Activated B cell treated with CpG ODN at 0.5 μM for 24 hours (primary cell): ENCODE measurements at regions of chr7 and their contacts with region 1.

Region 1: DNA sequence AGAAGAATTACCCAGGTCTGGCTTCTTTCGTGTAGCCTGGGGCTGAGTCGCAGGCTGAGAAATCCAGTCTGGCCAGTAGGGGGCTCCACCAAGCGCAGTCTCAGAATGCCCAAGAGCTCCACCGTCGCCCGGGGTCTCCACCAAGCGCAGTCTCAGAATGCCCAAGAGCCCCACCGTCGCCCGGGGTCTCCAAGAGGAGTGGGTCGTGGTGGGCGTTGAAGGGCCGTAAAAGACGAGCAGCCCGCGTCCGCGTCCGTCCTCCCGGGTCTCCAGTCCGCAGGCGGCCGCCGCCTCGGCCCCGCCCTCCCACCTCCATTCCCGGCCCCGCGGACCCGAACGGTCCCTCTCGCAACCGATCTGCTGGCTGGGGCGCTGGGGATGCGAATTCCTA is 895 bp upstream of the ZYX start:
- DNase-seq: peak; percentile 82
- ATAC-seq: peak; percentile 50
- H3K4me3 Mint-ChIP-seq: peak overlapping the region; percentile 86
- H3K27ac Mint-ChIP-seq: peak overlapping the region; percentile 85
- H3K4me1 Mint-ChIP-seq: peaks cover 32% of the 10 kb centered on the region
- H3K27me3 Mint-ChIP-seq: no peaks in the 10 kb centered on the region
- CTCF ChIP-seq: peak; percentile 73

Region 2: GRCh38 chr7:142853739-142854371 is 526.4 kb before region 1 on chr7:
- CTCF ChIA-PET with region 1: interaction called, 3 read pairs
- POLR2A ChIA-PET with region 1: no interaction called
- intact Hi-C with region 1: loop called (anchors 5 kb)
- DNase-seq: peak; percentile 76
- ATAC-seq: peak; percentile 88
- H3K4me3 Mint-ChIP-seq: peak overlapping the region; percentile 97
- H3K27ac Mint-ChIP-seq: peak overlapping the region; percentile 95
- H3K4me1 Mint-ChIP-seq: peaks cover 27% of the 10 kb centered on the region
- H3K27me3 Mint-ChIP-seq: no peaks in the 10 kb centered on the region
- CTCF ChIP-seq: peak; percentile 61

Region 3: GRCh38 chr7:143240291-143241168 is 139.7 kb before region 1 on chr7:
- CTCF ChIA-PET with region 1: interaction called, 9 read pairs
- POLR2A ChIA-PET with region 1: interaction called, 4 read pairs
- intact Hi-C with region 1: loop called (anchors 1 kb)
- DNase-seq: no peak
- ATAC-seq: peak; percentile 98
- H3K4me3 Mint-ChIP-seq: no peak overlapping the region
- H3K27ac Mint-ChIP-seq: no peak overlapping the region
- H3K4me1 Mint-ChIP-seq: peaks cover 4% of the 10 kb centered on the region
- H3K27me3 Mint-ChIP-seq: peaks cover 14% of the 10 kb centered on the region
- CTCF ChIP-seq: peak; percentile 51

Region 4: DNA sequence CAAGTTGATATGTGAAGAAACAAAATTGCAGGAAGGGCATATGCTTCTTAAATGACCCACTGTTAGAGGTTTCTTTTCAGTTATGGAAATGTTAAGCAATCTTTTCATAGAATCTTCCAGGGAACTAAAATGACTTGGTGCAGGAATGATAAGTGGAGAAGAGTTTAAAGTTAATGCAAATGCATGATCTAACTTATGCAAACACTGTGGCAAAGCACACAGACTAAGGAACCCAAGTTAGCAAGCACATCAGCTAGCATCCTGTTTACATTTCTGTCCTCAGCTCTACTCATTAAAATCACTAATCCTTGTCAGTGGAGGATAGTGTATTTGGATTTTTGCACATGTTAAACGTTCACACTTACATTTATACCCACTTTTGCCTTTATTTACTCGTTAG is 55.0 kb before region 1 on chr7:
- CTCF ChIA-PET with region 1: interaction called, 3 read pairs
- POLR2A ChIA-PET with region 1: interaction called, 6 read pairs
- intact Hi-C with region 1: loop called (anchors 5 kb)
- DNase-seq: no peak
- ATAC-seq: peak; percentile 62
- H3K4me3 Mint-ChIP-seq: peak overlapping the region; percentile 46
- H3K27ac Mint-ChIP-seq: peak overlapping the region; percentile 78
- H3K4me1 Mint-ChIP-seq: peaks cover 43% of the 10 kb centered on the region
- H3K27me3 Mint-ChIP-seq: no peaks in the 10 kb centered on the region
- CTCF ChIP-seq: no peak

Region 5: GRCh38 chr7:143408686-143409561 is 28.7 kb after region 1 on chr7 and contains the start of gene EPHA1:
- CTCF ChIA-PET with region 1: interaction called, 11 read pairs
- POLR2A ChIA-PET with region 1: interaction called, 6 read pairs
- intact Hi-C with region 1: loop called (anchors 2 kb)
- DNase-seq: no peak
- ATAC-seq: peak; percentile 80
- H3K4me3 Mint-ChIP-seq: peak within 1 kb of the TSS; percentile 38
- H3K27ac Mint-ChIP-seq: no peak within 1 kb of the TSS
- H3K4me1 Mint-ChIP-seq: peaks cover 29% of the 10 kb centered on the region
- H3K27me3 Mint-ChIP-seq: peaks cover 34% of the 10 kb centered on the region
- CTCF ChIP-seq: no peak
- total RNA-seq, gene EPHA1: not detected in 2 replicates

Region 6: GRCh38 chr7:144835652-144836544 is 1455.6 kb after region 1 on chr7 and contains the start of gene TPK1:
- CTCF ChIA-PET with region 1: no interaction called
- POLR2A ChIA-PET with region 1: no interaction called
- intact Hi-C with region 1: loop called (anchors 10 kb)
- DNase-seq: peak; percentile 88
- ATAC-seq: peak; percentile 85
- H3K4me3 Mint-ChIP-seq: peak within 1 kb of the TSS; percentile 98
- H3K27ac Mint-ChIP-seq: peak within 1 kb of the TSS; percentile 99
- H3K4me1 Mint-ChIP-seq: peaks cover 28% of the 10 kb centered on the region
- H3K27me3 Mint-ChIP-seq: no peaks in the 10 kb centered on the region
- CTCF ChIP-seq: no peak
- total RNA-seq, gene TPK1: 17.5 and 20.0 TPM in 2 replicates